ENCODE measurements at regions of chr4 and their contacts with region 1.

Region 1: DNA sequence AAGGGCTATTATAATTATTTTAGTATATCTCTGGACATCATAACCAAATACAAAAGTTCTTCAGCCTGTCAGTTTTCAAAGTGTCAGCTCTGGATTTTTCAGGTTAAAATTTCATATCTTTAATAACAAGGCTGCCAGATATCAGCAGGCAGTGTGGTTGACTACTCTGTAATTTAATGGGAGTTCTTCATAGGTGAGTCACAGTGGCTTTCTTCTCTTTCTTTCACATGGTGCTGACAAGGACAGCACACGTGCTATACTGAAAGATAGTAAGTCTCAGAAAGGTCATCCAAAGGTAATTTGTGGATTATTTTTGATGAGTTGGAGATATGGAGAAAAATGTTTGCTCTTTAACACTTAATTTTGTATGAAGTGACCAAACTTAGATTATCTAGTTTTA is 43.2 kb downstream of the GALNT7 start:
- DNase-seq: peak; percentile 87
- H3K4me3 ChIP-seq: no peak overlapping the region
- H3K27ac ChIP-seq: peak overlapping the region; percentile 68
- H3K4me1 ChIP-seq: peaks cover 54% of the 10 kb centered on the region
- H3K27me3 ChIP-seq: no peaks in the 10 kb centered on the region
- CTCF ChIP-seq: no peak

Region 2: GRCh38 chr4:173192375-173193162 is 19.3 kb before region 1 on chr4:
- CTCF ChIA-PET with region 1: no interaction called
- dilution Hi-C with region 1: no loop called
- in situ Hi-C with region 1: no loop called
- intact Hi-C with region 1: loop called (anchors 2 kb)
- DNase-seq: no peak
- H3K4me3 ChIP-seq: no peak overlapping the region
- H3K27ac ChIP-seq: peak overlapping the region; percentile 96
- H3K4me1 ChIP-seq: peaks cover 23% of the 10 kb centered on the region
- H3K27me3 ChIP-seq: no peaks in the 10 kb centered on the region
- CTCF ChIP-seq: peak in 1 of 2 donors; percentile 40